Activated CD4-positive, alpha-beta memory T cell treated with anti-CD3 and anti-CD28 coated beads, Interleukin-2, amount 10 ng/mL, durations not matched to agents 7 days and 5 days (primary cell): ENCODE measurements at regions of chr17 and their contacts with region 1.

Region 1: GRCh38 chr17:81702971-81703746 is at the start of gene MRPL12:
- DNase-seq: peak; percentile 91
- H3K4me3 Mint-ChIP-seq: peak within 1 kb of the TSS; percentile 95
- H3K27ac Mint-ChIP-seq: peak within 1 kb of the TSS; percentile 94
- H3K4me1 Mint-ChIP-seq: peaks cover 36% of the 10 kb centered on the region
- H3K27me3 Mint-ChIP-seq: no peaks in the 10 kb centered on the region
- total RNA-seq, gene MRPL12: 57.2 to 59.6 TPM

Region 2: GRCh38 chr17:81512560-81513371 is 190.4 kb before region 1 on chr17 and contains the start of gene ACTG1:
- CTCF ChIA-PET with region 1: no interaction called
- POLR2A ChIA-PET with region 1: interaction called, 14 read pairs
- DNase-seq: peak; percentile 92
- H3K4me3 Mint-ChIP-seq: peak within 1 kb of the TSS; percentile 93
- H3K27ac Mint-ChIP-seq: peak within 1 kb of the TSS; percentile 90
- H3K4me1 Mint-ChIP-seq: peaks cover 39% of the 10 kb centered on the region
- H3K27me3 Mint-ChIP-seq: no peaks in the 10 kb centered on the region
- total RNA-seq, gene ACTG1: 3,658 to 3,769 TPM

Region 3: DNA sequence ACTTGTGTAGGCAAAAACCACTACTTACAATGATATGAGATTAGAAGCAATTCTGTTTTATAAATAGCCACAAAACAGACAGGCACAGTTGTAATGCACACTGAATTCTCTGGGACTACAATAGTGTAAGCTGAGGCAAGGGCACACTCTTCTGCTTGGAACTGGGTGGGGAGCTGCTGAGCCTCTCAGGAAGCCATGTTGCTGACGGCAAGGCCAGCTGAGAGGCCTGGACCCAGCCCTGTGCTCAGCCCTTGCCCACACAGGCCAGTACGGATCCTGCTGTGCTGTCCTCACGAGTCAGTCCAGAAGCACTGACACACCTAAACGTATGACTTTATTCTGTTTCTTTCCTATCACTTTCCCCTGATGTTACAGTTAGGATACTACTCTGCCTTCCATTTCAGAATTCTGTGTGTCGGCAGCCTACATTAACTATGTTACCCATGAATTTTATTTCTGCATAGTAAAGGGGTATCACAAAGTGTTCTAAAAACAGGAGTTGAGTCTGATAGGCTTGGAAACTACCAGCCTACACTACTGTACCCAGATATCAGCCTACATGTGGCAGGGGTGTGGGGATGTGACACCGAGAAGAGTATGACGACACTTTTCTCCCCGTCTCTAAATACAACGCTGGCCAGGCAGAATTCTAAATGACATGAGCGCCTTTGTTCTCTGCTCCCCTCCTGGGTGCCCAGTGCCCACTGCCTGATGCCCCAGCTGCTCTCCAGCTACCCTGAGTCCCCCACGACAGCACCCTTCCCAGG is 109.9 kb before region 1 on chr17:
- CTCF ChIA-PET with region 1: no interaction called
- POLR2A ChIA-PET with region 1: no interaction called
- DNase-seq: no peak
- H3K4me3 Mint-ChIP-seq: no peak overlapping the region
- H3K27ac Mint-ChIP-seq: no peak overlapping the region
- H3K4me1 Mint-ChIP-seq: peaks cover 3% of the 10 kb centered on the region
- H3K27me3 Mint-ChIP-seq: no peaks in the 10 kb centered on the region

Region 4: DNA sequence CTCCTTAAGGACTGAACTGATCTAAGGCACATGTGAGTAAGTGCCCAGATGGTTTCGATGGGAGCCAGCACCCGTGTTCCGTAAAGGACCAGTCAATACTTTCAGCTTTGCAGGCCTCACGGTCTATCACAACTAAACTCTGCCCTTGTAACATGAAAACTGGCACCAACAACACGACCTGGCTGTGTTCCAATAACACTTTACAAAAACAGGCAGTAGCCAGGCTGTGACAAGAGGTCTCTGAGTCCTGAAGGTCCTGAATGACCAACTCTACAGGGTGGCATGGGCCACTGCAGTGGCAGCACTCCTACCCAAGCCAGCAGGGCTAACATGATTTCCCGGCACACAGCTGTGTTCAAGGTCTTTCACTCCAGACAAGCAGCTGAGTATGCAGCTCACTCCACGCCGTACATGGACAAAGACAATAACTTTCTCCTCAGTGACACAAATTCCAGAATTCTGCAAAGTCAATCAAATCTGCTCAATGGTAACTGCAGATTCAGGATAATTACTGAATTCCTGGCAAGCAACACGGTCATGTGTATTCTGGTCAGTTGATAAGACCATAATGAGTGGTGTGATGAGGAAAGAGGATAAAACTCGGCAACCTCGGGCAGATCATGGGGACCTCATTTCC is 81.5 kb before region 1 on chr17:
- CTCF ChIA-PET with region 1: no interaction called
- POLR2A ChIA-PET with region 1: no interaction called
- DNase-seq: no peak
- H3K4me3 Mint-ChIP-seq: no peak overlapping the region
- H3K27ac Mint-ChIP-seq: no peak overlapping the region
- H3K4me1 Mint-ChIP-seq: peaks cover 9% of the 10 kb centered on the region
- H3K27me3 Mint-ChIP-seq: no peaks in the 10 kb centered on the region

Region 5: GRCh38 chr17:81676906-81677305 is 26.3 kb before region 1 on chr17:
- CTCF ChIA-PET with region 1: interaction called, 42 read pairs
- POLR2A ChIA-PET with region 1: interaction called, 111 read pairs
- DNase-seq: no peak
- H3K4me3 Mint-ChIP-seq: no peak overlapping the region
- H3K27ac Mint-ChIP-seq: no peak overlapping the region
- H3K4me1 Mint-ChIP-seq: peaks cover 5% of the 10 kb centered on the region
- H3K27me3 Mint-ChIP-seq: no peaks in the 10 kb centered on the region

Region 6: GRCh38 chr17:81741049-81741593 is 38.0 kb after region 1 on chr17:
- CTCF ChIA-PET with region 1: no interaction called
- POLR2A ChIA-PET with region 1: no interaction called
- DNase-seq: no peak
- H3K4me3 Mint-ChIP-seq: no peak overlapping the region
- H3K27ac Mint-ChIP-seq: no peak overlapping the region
- H3K4me1 Mint-ChIP-seq: no peaks in the 10 kb centered on the region
- H3K27me3 Mint-ChIP-seq: peaks cover 10% of the 10 kb centered on the region

Region 7: DNA sequence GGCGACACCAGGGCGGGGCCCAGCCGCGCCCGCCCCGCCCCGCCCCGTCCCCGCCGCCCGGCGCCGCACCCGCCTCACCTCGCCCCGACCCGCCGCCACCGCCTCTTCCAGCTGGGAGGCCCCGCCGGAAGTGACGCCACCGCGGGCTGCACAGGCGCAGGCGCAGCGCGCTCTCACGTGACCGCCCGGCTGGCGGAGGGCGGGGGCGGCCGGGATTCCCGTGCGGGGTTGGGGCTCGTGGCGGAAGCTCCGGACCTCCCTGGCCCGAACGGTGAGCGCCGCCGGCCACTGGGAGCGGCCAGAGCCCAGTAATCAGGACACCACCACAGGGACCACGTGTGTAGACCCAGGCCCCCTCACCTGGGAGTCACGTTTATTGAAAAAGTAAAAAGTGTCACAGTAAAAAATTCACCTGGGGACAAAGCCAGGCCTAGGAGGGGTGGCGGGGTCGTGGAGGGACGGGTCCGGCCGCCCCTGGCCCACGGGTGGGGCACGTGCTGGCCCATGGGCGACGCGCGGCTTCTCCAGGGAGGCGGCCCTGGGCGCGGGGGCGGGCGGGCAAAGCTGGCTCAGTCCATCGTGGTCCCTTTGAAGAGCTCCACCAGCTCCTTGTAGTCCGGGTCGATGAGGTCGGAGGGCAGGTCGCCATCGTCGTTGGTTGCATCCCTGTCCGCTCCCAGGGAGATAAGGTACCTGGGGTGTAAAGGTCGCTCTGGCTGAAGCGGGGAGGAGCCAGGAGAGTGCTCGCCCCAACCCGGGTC is 130.2 kb after region 1 on chr17 and contains the start of gene MCRIP1:
- CTCF ChIA-PET with region 1: no interaction called
- POLR2A ChIA-PET with region 1: interaction called, 20 read pairs
- DNase-seq: peak; percentile 96
- H3K4me3 Mint-ChIP-seq: peak within 1 kb of the TSS; percentile 88
- H3K27ac Mint-ChIP-seq: peak within 1 kb of the TSS; percentile 92
- H3K4me1 Mint-ChIP-seq: peaks cover 31% of the 10 kb centered on the region
- H3K27me3 Mint-ChIP-seq: no peaks in the 10 kb centered on the region
- total RNA-seq, gene MCRIP1: 37.1 to 38.2 TPM

Region 8: DNA sequence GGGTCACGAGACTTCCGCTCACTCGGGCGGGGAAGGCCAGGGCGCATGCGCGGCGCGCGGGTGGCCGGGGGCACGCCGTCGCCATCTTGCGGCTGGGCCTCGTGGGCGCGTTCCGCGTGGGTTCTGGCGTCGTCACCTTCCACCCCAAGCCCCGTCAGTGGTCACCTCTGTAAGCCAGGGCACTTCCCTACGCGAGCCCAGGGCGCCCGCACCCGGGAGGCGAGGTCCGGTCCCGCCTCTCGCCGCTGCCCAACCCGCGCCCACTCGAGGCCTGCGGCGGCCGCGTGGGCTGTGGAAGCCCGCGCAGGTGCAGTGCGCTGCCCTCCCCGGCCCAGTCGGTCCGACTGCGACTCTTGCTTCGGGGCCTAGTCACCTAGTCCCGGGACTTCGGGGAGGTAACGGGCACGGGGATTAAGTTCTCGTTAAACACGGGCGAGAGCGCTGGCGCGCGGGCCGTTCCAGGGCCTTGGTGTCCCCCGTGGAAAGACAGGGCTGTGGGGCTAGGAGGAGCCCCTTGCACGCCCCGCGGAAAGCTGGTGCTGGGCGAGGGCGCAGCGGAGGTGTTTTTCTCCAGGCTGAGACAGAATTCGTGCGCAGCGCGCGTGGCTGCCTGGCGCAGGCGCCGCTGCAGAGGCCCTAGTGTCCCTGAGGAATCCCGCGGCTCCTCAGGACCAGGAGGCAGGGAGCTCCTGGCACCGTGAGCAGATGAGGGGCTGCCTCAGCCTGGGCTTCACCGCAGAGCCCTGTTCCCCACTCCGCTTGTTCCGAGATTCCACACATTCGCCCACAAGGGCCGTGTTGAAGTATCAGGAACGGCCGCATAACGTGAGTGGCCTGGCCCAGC is 168.4 kb after region 1 on chr17:
- CTCF ChIA-PET with region 1: no interaction called
- POLR2A ChIA-PET with region 1: interaction called, 39 read pairs
- DNase-seq: peak; percentile 95
- H3K4me3 Mint-ChIP-seq: peak overlapping the region; percentile 74
- H3K27ac Mint-ChIP-seq: peak overlapping the region; percentile 82
- H3K4me1 Mint-ChIP-seq: peaks cover 45% of the 10 kb centered on the region
- H3K27me3 Mint-ChIP-seq: no peaks in the 10 kb centered on the region

Region 9: DNA sequence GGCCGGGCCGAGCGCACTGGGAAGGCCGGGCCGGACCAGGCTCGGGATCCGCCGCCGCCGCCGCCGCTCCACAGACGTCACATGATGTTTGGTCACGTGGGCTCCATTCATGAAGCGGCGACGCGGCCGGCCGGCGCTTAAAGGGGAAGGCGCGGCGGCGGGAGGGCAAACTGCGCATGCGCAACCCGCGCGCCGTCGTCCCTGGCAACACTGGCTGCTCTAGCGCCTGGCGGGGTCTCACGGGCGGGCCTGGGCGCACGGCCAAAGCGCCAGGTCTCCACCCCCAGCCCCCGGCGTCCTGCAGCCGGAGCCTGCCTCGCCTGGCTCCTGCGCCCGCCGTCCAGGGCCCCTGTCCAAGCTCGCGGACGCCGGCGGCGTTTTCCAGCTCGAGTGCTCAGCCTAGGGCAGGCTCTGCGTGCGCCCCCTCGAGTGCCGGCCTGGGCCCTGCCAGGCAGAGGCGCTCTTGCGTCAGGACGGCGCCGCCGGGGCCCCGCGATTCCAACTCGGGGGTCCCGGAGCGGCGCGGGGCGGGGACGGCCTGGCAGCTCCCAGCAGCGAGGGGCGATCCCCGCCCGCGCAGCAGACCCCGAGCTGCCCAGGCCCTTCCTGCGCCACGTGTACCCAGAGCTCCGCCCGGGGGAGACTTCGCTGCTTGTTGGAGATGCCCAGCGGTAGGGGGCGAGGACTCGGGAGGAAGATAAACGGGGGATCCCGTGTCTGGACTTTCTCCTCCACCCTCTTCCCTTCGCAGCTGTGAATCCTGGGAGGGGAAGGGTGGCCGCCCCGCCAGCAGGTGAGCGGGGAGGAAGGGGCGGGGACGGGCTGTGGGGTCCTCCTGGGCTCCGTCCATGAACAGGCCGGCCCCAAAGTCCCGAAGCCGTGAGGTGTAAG is 224.7 kb after region 1 on chr17 and contains the start of gene MAFG:
- CTCF ChIA-PET with region 1: no interaction called
- POLR2A ChIA-PET with region 1: interaction called, 20 read pairs
- DNase-seq: peak; percentile 91
- H3K4me3 Mint-ChIP-seq: peak within 1 kb of the TSS; percentile 91
- H3K27ac Mint-ChIP-seq: peak within 1 kb of the TSS; percentile 94
- H3K4me1 Mint-ChIP-seq: peaks cover 35% of the 10 kb centered on the region
- H3K27me3 Mint-ChIP-seq: peaks cover 4% of the 10 kb centered on the region
- total RNA-seq, gene MAFG: 35.2 to 36.5 TPM